WTC11 (cell line): ENCODE measurements at regions of chr11 and their contacts with region 1.

Region 1: GRCh38 chr11:44634401-44635281 is 69.2 kb downstream of the CD82 start:
- DNase-seq: peak; percentile 80
- ATAC-seq: peak; percentile 79
- H3K4me3 Mint-ChIP-seq: no peak overlapping the region
- H3K27ac Mint-ChIP-seq: no peak overlapping the region
- H3K4me1 Mint-ChIP-seq: peaks cover 29% of the 10 kb centered on the region
- H3K27me3 Mint-ChIP-seq: no peaks in the 10 kb centered on the region; the same call in 1 of the 2 replicates
- CTCF ChIP-seq: no peak

Region 2: DNA sequence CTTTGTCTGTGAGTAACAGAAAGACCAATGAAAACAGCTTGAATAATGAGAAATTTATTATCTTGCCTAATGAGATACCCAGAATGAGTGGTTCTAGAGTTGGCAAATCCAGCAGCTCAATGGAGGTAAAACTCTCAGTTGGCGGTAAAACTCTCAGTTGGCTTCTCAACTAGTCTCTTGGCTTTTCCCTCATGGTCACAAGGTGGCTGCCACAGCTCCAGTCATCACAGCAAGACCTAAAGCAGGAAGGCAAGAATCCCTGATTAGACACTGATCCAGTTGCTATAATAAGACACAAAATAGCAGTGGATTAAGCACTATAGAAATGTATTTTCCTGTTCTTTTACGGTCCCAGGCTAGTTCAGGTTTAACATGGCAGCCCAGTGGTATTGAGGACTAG is 54.6 kb after region 1 on chr11:
- CTCF ChIA-PET with region 1: no interaction called
- POLR2A ChIA-PET with region 1: interaction called, 11 read pairs
- DNase-seq: no peak
- ATAC-seq: no peak
- H3K4me3 Mint-ChIP-seq: no peak overlapping the region
- H3K27ac Mint-ChIP-seq: no peak overlapping the region
- H3K4me1 Mint-ChIP-seq: peaks cover 5% of the 10 kb centered on the region
- H3K27me3 Mint-ChIP-seq: peaks cover 3% of the 10 kb centered on the region; the same call in 1 of the 2 replicates
- CTCF ChIP-seq: no peak

Region 3: GRCh38 chr11:44727373-44728287 is 93.0 kb after region 1 on chr11:
- CTCF ChIA-PET with region 1: interaction called, 18 read pairs
- POLR2A ChIA-PET with region 1: interaction called, 4 read pairs
- DNase-seq: peak; percentile 86
- ATAC-seq: peak; percentile 58
- H3K4me3 Mint-ChIP-seq: peak overlapping the region; percentile 78
- H3K27ac Mint-ChIP-seq: no peak overlapping the region
- H3K4me1 Mint-ChIP-seq: peaks cover 57% of the 10 kb centered on the region
- H3K27me3 Mint-ChIP-seq: peaks cover 75% of the 10 kb centered on the region
- CTCF ChIP-seq: peak; percentile 97